Naive thymus-derived CD8-positive, alpha-beta T cell (primary cell): ENCODE measurements at regions of chr20 and their contacts with region 1.

Region 1: DNA sequence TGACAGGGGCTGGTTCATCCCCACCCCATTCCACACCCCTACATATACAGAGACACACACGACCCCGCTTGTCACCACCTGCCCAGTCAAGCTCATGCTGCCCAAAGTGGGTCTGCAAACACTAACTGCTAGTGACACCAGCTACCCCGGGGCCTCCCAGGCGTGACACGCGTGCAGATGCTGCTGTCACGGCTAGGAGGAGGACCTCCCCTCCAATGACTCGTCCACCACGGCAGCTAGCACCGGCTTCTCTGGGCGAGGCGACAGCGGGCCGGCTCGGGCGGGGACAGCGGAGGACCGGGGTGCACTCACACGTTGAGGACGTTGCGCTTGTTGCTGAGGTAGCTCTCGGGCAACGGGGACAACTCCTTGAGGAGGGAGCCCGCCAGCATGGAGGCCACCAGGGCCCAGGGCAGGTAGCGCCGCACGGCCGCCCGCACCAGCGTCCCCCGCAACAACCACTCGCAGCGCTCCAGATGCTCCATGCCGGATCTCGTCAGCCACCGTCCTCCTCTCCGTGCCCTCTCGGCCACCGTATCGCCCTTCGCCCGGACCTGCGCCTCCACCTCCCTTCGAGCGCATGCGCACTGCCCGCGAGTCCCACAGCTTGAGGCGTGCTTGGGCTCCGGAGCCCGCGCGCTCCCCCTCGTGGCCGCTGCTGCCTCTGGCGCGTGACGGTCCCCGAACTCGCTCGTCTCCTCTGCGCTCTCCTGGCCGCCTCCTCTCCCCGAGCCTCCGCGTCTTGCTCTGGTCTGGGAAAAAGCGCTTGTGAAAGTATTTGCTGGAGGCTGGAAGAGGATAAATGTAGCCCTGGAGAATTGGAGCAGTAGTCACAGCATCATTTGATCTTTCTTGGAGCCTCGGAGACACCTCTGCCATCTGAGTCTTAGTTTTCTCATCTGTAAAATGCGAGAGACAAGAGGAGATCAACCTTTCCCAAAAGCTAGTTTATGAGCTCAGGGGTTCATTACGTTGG is at the start of gene FITM2:
- DNase-seq: peak; percentile 97 to 100 (median 98)
- ATAC-seq: peak; percentile 93 to 94
- H3K4me3 Mint-ChIP-seq: peak within 1 kb of the TSS; percentile 87 to 98 (median 94)
- H3K27ac Mint-ChIP-seq: peak within 1 kb of the TSS; percentile 86 to 99 (median 94)
- H3K4me1 Mint-ChIP-seq: peaks cover 22 to 37% (median 29%) of the 10 kb centered on the region in 4 donors
- H3K27me3 Mint-ChIP-seq: peaks cover 0 to 4% (median 0%) of the 10 kb centered on the region in 5 donors
- polyA plus RNA-seq, gene FITM2: 0.72 to 2.4 (median 1.2) TPM

Region 2: DNA sequence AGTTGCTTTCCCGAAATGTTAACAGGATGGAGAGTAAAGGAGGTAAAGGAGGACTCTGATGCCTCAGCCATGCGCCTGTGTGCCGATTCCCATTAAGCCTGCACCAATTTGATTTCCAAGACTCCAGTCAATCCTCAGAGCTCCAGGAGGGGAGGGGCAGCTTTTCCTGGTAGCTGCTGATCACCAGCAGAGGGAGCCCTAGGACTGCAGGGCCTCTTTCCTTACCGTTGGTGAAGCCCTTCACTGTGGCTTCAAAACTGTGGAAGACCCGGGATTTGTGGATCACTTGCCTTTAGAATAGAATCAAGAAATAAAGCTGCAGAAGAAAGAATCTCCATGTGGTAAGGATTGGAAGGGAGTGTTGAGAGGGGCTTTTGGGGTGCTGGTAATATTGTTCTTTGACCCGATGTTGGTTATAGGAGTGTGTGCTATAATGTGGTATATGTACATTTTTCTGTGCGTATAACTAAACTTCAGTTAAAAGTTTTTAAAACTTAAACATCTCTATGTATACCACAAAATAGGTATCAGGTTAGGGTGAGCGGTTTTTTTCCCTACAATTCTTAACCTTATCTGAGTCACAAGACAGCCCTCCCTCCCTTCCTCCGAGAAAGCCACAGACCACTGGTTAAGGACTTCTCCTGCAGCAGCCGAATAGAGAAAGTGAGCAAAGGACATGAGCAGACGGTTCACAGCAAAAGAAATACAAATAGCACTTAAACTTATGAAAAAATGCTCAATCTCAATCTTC is 93.4 kb before region 1 on chr20:
- POLR2A ChIA-PET with region 1: interaction called, 145 read pairs
- DNase-seq: peak; percentile 54 to 86 (median 70)
- ATAC-seq: peak; percentile 48 to 59
- H3K4me3 Mint-ChIP-seq: peak overlapping the region; percentile 65 to 89 (median 84)
- H3K27ac Mint-ChIP-seq: peak overlapping the region; percentile 93 to 97 (median 96)
- H3K4me1 Mint-ChIP-seq: peaks cover 43 to 79% (median 67%) of the 10 kb centered on the region in 4 donors
- H3K27me3 Mint-ChIP-seq: no peaks in the 10 kb centered on the region

Region 3: GRCh38 chr20:44279228-44279627 is 31.7 kb before region 1 on chr20:
- POLR2A ChIA-PET with region 1: no interaction called
- DNase-seq: no peak
- ATAC-seq: no peak
- H3K4me3 Mint-ChIP-seq: peak overlapping the region in 1 of 10 donors; percentile 6
- H3K27ac Mint-ChIP-seq: peak overlapping the region in 1 of 10 donors; percentile 68
- H3K4me1 Mint-ChIP-seq: peaks cover 0 to 7% (median 3%) of the 10 kb centered on the region in 4 donors
- H3K27me3 Mint-ChIP-seq: no peaks in the 10 kb centered on the region

Region 4: GRCh38 chr20:44435630-44436335 is 124.8 kb after region 1 on chr20:
- POLR2A ChIA-PET with region 1: no interaction called
- DNase-seq: no peak
- ATAC-seq: no peak
- H3K4me3 Mint-ChIP-seq: no peak overlapping the region
- H3K27ac Mint-ChIP-seq: no peak overlapping the region
- H3K4me1 Mint-ChIP-seq: no peaks in the 10 kb centered on the region
- H3K27me3 Mint-ChIP-seq: peaks cover 5 to 21% (median 9%) of the 10 kb centered on the region in 5 donors